Activated B cell treated with CpG ODN at 0.5 μM for 24 hours (primary cell): ENCODE measurements at regions of chr2 and their contacts with region 1.

Region 1: DNA sequence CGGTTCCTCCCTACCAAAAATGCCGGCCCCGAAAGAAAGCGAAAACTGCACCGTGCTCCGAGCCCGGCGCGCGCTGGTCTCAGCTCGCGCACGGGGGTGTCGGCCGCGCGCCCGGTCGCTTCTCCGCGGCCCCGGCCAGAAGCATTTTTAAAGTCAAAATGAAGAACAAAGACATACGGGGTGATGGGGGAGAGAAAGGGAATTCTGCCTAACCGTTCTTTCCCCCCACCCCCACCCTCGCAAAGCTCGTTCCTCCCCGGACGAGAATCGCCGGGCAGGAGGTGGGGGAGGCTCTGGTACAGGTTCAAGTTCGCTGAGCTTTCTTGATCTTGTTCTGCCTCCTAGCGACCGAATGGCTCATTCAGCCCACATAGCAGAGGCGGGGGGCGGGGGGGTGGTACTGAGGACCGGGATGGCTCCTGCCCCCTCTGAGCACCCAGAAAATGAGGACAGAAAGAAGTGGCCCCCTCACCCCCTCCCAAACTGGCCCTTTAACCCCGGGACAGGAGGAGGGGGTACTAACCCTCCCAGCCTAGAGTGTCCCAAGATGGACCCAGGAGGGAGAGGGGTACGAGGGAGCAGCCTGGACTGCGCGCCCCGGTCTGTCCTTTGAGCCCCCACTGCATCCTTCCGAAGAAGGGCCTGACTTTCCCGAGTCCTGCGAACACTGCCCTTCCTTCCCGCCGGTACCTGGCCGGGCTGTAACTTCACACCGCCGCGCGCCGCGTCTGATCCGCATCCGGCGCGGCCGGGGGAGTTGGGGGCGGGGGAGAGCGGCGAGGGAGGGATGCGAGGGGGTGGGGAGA is 3.1 kb downstream of the BCL11A start:
- DNase-seq: peak; percentile 68
- ATAC-seq: peak; percentile 56
- H3K4me3 Mint-ChIP-seq: peak overlapping the region; percentile 96
- H3K27ac Mint-ChIP-seq: peak overlapping the region; percentile 98
- H3K4me1 Mint-ChIP-seq: peaks cover 41% of the 10 kb centered on the region
- H3K27me3 Mint-ChIP-seq: no peaks in the 10 kb centered on the region
- CTCF ChIP-seq: peak; percentile 32

Region 2: DNA sequence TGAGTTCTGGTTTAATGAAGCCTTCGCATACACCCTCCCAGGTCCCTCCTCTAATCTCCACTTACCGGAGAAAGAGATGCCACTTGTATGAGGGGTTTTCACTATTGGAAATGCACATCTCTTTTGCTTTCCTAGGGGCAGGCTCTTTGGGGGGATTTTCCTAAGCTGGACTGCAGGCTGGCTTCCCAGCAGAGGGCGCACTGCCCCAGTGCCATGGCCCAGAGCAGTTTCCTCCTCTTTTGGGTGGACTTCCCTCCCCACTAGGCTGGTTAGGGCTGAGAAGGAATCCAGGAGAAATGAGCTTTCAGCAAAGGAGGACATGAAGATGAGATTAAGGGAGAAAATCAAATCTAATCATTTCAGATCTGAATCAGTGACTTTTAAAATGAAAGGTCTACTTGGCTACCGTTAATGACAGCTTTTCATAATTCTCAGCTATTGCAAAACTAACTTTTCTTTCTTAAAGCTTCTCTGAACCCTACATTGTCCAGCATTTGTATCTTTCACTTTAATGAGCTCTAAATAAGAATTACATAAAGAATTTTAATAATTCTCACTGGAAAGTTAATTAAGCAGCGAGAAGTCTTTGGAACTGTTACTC is 1525.1 kb before region 1 on chr2:
- CTCF ChIA-PET with region 1: interaction called, 38 read pairs
- POLR2A ChIA-PET with region 1: interaction called, 6 read pairs
- intact Hi-C with region 1: loop called (anchors 1 kb)
- DNase-seq: peak; percentile 50
- ATAC-seq: peak; percentile 54
- H3K4me3 Mint-ChIP-seq: no peak overlapping the region
- H3K27ac Mint-ChIP-seq: no peak overlapping the region
- H3K4me1 Mint-ChIP-seq: peaks cover 2% of the 10 kb centered on the region
- H3K27me3 Mint-ChIP-seq: peaks cover 10% of the 10 kb centered on the region
- CTCF ChIP-seq: peak; percentile 45

Region 3: GRCh38 chr2:59888015-59888414 is 662.4 kb before region 1 on chr2:
- CTCF ChIA-PET with region 1: interaction called, 11 read pairs
- POLR2A ChIA-PET with region 1: interaction called, 13 read pairs
- intact Hi-C with region 1: loop called (anchors 1 kb)
- DNase-seq: no peak
- ATAC-seq: peak; percentile 95
- H3K4me3 Mint-ChIP-seq: peak overlapping the region; percentile 39
- H3K27ac Mint-ChIP-seq: peak overlapping the region; percentile 81
- H3K4me1 Mint-ChIP-seq: peaks cover 39% of the 10 kb centered on the region
- H3K27me3 Mint-ChIP-seq: no peaks in the 10 kb centered on the region
- CTCF ChIP-seq: no peak

Region 4: DNA sequence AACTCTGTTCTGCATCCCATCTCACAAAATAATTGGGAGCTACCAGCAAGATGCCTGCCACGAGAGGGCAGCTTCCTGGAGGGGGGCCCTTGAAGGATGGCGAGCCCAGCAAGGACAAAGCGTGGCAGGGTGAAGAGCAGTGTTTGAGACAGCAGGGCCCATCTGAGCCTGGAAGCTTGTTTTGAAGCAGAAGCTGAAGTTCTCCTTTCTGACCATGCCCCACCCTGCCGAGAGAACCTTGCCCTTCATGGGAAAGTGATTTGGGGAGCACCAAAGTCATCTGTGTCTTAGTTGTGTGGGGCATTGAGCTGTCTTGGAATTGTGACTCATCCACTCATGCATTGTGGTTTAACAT is 213.3 kb before region 1 on chr2:
- CTCF ChIA-PET with region 1: interaction called, 13 read pairs
- POLR2A ChIA-PET with region 1: interaction called, 33 read pairs
- intact Hi-C with region 1: loop called (anchors 1 kb)
- DNase-seq: no peak
- ATAC-seq: peak; percentile 80
- H3K4me3 Mint-ChIP-seq: peak overlapping the region; percentile 32
- H3K27ac Mint-ChIP-seq: peak overlapping the region; percentile 95
- H3K4me1 Mint-ChIP-seq: peaks cover 65% of the 10 kb centered on the region
- H3K27me3 Mint-ChIP-seq: no peaks in the 10 kb centered on the region
- CTCF ChIP-seq: no peak

Region 5: DNA sequence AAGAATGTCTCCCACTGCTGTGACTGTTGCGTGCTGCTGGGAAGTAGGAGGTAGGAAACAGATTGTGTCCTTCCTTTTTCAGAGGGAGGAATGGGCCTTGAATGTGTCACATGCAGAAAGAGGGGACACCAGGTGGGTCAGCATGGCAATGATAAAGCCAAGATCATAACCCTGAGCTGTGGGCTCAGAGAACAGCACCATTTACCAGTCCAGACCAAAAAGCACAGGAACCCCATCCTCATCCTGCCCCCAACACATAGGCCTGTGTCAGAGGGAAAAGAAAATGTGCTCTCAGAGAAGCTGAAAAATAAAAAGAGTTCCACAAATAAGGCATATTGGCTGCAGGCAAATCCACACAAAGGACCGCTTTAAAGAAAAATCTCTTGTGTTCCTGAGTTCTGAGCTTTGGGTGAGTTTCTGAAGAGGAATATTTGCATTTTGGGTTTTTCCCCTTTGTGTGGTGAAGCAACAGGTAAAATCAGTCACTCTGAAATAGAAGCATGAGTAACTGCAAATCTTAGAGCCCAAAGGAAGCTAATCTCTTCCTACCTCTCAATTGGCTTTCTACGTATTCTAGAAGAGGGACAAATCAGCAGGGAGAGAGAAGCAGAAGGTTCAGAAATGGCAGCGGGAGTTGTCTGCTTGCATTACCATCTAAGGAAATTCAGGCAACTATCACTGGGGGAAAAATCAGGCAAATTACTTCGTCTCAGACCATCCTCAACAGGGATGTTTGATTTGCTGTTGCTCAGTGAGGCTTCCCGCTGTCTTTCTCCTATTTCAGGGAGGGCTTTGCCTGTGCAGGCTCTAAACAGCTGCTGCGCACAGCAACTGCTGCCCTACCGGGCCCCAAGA is 103.7 kb before region 1 on chr2:
- CTCF ChIA-PET with region 1: interaction called, 5 read pairs
- POLR2A ChIA-PET with region 1: interaction called, 128 read pairs
- intact Hi-C with region 1: loop called (anchors 1 kb)
- DNase-seq: no peak
- ATAC-seq: peak; percentile 78
- H3K4me3 Mint-ChIP-seq: peak overlapping the region; percentile 78
- H3K27ac Mint-ChIP-seq: peak overlapping the region; percentile 98
- H3K4me1 Mint-ChIP-seq: peaks cover 90% of the 10 kb centered on the region
- H3K27me3 Mint-ChIP-seq: no peaks in the 10 kb centered on the region
- CTCF ChIP-seq: no peak

Region 6: GRCh38 chr2:60522476-60522875 is 27.9 kb before region 1 on chr2:
- CTCF ChIA-PET with region 1: interaction called, 5 read pairs
- POLR2A ChIA-PET with region 1: interaction called, 54 read pairs
- intact Hi-C with region 1: no loop called
- DNase-seq: no peak
- ATAC-seq: no peak
- H3K4me3 Mint-ChIP-seq: peak overlapping the region; percentile 8
- H3K27ac Mint-ChIP-seq: peak overlapping the region; percentile 72
- H3K4me1 Mint-ChIP-seq: peaks cover 98% of the 10 kb centered on the region
- H3K27me3 Mint-ChIP-seq: no peaks in the 10 kb centered on the region
- CTCF ChIP-seq: no peak

Region 7: DNA sequence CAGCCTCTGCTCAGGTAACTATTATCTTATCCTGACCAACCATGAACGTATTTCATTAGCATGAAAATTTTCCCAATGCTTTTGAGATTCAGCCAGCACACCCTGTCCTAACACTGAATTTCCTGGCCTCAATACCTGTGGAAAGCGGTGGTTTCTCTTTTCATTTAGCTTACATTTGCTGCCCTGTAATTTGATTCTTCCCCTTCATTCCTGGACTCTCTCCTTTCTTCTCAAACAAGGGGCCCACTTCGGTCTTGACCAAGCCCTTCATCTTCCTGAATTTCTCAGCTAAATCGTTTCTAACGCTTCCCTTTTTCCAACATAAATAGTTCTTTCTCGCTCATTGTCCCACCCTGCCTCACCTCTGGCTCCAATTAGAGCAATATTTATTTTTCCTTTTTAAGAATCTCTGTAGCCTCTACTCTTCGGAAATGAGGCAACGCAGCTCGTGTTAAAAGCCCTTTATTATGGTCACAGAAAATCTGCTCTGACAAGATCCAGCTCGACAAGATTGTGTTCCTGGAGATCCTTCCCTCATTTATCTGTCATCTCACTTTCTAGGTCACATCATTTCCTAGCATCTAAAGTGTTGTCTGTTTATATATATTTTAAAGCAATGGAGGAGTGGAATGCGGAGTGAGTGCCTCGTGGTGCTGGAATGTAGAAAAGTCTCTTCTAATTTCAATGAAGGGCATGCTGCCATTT is 52.6 kb after region 1 on chr2:
- CTCF ChIA-PET with region 1: no interaction called
- POLR2A ChIA-PET with region 1: no interaction called
- intact Hi-C with region 1: no loop called
- DNase-seq: no peak
- ATAC-seq: no peak
- H3K4me3 Mint-ChIP-seq: no peak overlapping the region
- H3K27ac Mint-ChIP-seq: no peak overlapping the region
- H3K4me1 Mint-ChIP-seq: peaks cover 9% of the 10 kb centered on the region
- H3K27me3 Mint-ChIP-seq: peaks cover 8% of the 10 kb centered on the region
- CTCF ChIP-seq: no peak

Region 8: DNA sequence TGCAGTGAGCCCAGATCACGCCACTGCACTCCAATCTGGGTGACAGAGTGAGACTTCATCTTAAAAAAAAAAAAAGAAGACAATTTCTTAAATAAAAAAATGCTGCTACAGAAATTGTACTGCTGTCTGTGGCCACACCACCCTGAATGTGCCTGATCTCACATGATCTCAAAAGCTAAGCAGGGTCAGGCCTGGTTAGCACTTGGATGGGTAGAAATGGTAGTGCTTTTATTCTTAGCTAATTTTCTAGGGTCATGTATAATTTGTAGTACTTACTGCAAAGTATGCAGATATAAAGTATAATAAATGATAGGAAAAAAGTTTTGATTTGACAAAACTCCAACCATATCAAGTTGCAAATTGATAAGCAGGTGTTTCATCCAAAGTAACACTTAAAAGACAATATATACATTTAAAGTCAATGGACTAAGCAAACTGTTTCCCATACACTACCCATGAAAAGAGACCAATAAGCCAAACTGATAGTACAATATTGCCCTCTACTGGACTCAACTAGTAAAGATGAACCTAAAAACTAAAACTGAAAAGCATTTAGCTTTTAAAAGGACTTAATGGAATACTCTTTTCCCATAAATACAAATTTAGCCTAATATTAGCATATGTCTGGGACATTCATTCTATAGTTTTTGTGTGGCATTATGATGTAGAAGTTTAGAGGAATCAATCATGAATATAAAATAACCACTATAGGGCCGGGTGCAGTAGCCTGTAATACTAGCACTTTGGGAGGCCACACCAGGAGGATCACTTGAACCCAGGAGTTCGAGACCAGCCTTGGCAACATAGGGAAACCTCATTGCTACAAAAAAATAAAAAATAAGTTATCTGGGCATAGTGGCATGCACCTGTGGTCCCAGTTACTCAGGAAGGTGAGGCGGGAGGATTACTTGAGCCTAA is 448.5 kb after region 1 on chr2:
- CTCF ChIA-PET with region 1: no interaction called
- POLR2A ChIA-PET with region 1: no interaction called
- intact Hi-C with region 1: loop called (anchors 10 kb)
- DNase-seq: no peak
- ATAC-seq: peak; percentile 70
- H3K4me3 Mint-ChIP-seq: no peak overlapping the region
- H3K27ac Mint-ChIP-seq: peak overlapping the region; percentile 75
- H3K4me1 Mint-ChIP-seq: peaks cover 42% of the 10 kb centered on the region
- H3K27me3 Mint-ChIP-seq: no peaks in the 10 kb centered on the region
- CTCF ChIP-seq: no peak